ENCODE measurements at regions of chr10 and their contacts with region 1.

Region 1: GRCh38 chr10:6144406-6145165 is 55.8 kb downstream of the RBM17 start:
- DNase-seq: peak; percentile 91
- ATAC-seq: peak; percentile 87
- H3K4me3 ChIP-seq: peak overlapping the region; percentile 63 to 93 (median 74)
- H3K4me3 Mint-ChIP-seq: peak overlapping the region; percentile 91
- H3K27ac ChIP-seq: peak overlapping the region; percentile 49 to 79
- H3K27ac Mint-ChIP-seq: peak overlapping the region; percentile 74
- H3K4me1 ChIP-seq: peaks cover 26 to 50% of the 10 kb centered on the region in 2 donors
- H3K4me1 Mint-ChIP-seq: peaks cover 56% of the 10 kb centered on the region
- H3K27me3 ChIP-seq: peaks cover 0 to 17% (median 5%) of the 10 kb centered on the region in 4 experiments
- H3K27me3 Mint-ChIP-seq: peaks cover 3% of the 10 kb centered on the region
- CTCF ChIP-seq: no peak

Region 2: DNA sequence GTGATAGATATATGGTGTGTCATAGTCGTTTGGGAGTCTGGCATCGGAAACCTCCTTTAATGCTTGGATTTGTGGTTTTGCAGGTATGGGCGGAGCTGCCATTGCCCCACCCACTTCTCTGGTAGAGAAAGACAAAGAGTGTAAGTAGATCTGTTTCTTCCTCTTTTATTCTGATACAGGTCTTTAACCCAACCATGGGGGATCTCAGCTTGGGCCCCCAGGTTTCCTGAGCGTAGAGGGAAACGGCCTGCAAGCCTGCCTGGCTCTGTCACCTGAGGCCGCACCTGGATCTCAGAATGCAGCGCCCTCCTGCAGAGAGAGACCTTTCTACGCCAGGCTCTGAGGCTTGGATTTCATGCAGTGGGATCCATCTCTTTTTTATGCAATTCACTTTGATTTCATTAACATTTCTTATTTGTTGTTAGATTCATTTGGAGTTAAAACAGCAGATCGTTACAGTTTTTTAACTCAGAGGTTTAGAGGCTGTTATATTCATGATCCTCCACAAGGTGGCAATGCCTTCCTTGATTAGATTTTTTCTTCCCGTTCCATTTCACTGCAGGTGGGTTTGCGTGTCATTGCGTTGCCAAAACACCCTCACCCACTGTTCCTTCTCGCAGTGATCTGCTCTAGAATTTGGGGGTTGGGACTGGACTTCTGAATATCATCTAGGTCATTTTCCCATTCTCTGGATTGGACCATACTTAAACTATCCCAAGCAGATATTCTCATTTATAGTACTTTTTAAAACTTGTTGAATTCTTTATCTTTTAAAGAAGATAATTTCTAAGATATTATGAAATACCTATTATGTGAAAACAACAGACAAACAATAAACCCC is 35.8 kb before region 1 on chr10:
- CTCF ChIA-PET with region 1: interaction called, 10 read pairs
- POLR2A ChIA-PET with region 1: no interaction called
- intact Hi-C with region 1: no loop called
- DNase-seq: peak; percentile 72
- ATAC-seq: peak; percentile 80
- H3K4me3 ChIP-seq: no peak overlapping the region
- H3K4me3 Mint-ChIP-seq: no peak overlapping the region
- H3K27ac ChIP-seq: no peak overlapping the region
- H3K27ac Mint-ChIP-seq: no peak overlapping the region
- H3K4me1 ChIP-seq: peaks cover 7 to 9% of the 10 kb centered on the region in 2 donors
- H3K4me1 Mint-ChIP-seq: peaks cover 12% of the 10 kb centered on the region
- H3K27me3 ChIP-seq: no peaks in the 10 kb centered on the region
- H3K27me3 Mint-ChIP-seq: no peaks in the 10 kb centered on the region
- CTCF ChIP-seq: peak; percentile 87

Region 3: GRCh38 chr10:6163364-6164270 is 19.0 kb after region 1 on chr10:
- CTCF ChIA-PET with region 1: interaction called, 6 read pairs
- POLR2A ChIA-PET with region 1: interaction called, 5 read pairs
- intact Hi-C with region 1: loop called (anchors 1 kb)
- DNase-seq: peak; percentile 95
- ATAC-seq: peak; percentile 96
- H3K4me3 ChIP-seq: peak overlapping the region in 4 of 5 experiments; percentile 69 to 84 (median 72)
- H3K4me3 Mint-ChIP-seq: peak overlapping the region; percentile 97
- H3K27ac ChIP-seq: peak overlapping the region; percentile 89 to 96
- H3K27ac Mint-ChIP-seq: peak overlapping the region; percentile 98
- H3K4me1 ChIP-seq: peaks cover 16 to 19% of the 10 kb centered on the region in 2 donors
- H3K4me1 Mint-ChIP-seq: peaks cover 39% of the 10 kb centered on the region
- H3K27me3 ChIP-seq: no peaks in the 10 kb centered on the region
- H3K27me3 Mint-ChIP-seq: no peaks in the 10 kb centered on the region
- CTCF ChIP-seq: no peak

Region 4: GRCh38 chr10:6195846-6196245 is 51.3 kb after region 1 on chr10:
- CTCF ChIA-PET with region 1: no interaction called
- POLR2A ChIA-PET with region 1: no interaction called
- intact Hi-C with region 1: no loop called
- DNase-seq: no peak
- ATAC-seq: no peak
- H3K4me3 ChIP-seq: no peak overlapping the region
- H3K4me3 Mint-ChIP-seq: no peak overlapping the region
- H3K27ac ChIP-seq: no peak overlapping the region
- H3K27ac Mint-ChIP-seq: no peak overlapping the region
- H3K4me1 ChIP-seq: peaks cover 6 to 10% of the 10 kb centered on the region in 2 donors
- H3K4me1 Mint-ChIP-seq: peaks cover 16% of the 10 kb centered on the region
- H3K27me3 ChIP-seq: no peaks in the 10 kb centered on the region
- H3K27me3 Mint-ChIP-seq: no peaks in the 10 kb centered on the region
- CTCF ChIP-seq: no peak

Region 5: GRCh38 chr10:6936931-6937330 is 792.3 kb after region 1 on chr10:
- CTCF ChIA-PET with region 1: no interaction called
- POLR2A ChIA-PET with region 1: no interaction called
- intact Hi-C with region 1: no loop called
- DNase-seq: no peak
- ATAC-seq: no peak
- H3K4me3 ChIP-seq: no peak overlapping the region
- H3K4me3 Mint-ChIP-seq: no peak overlapping the region
- H3K27ac ChIP-seq: no peak overlapping the region
- H3K27ac Mint-ChIP-seq: no peak overlapping the region
- H3K4me1 ChIP-seq: no peaks in the 10 kb centered on the region
- H3K4me1 Mint-ChIP-seq: peaks cover 2% of the 10 kb centered on the region
- H3K27me3 ChIP-seq: peaks cover 0 to 10% (median 1%) of the 10 kb centered on the region in 4 experiments
- H3K27me3 Mint-ChIP-seq: peaks cover 9% of the 10 kb centered on the region
- CTCF ChIP-seq: no peak

Region 6: GRCh38 chr10:7787857-7788638 is 1643.5 kb after region 1 on chr10 and contains the starts of genes ATP5F1C and KIN:
- CTCF ChIA-PET with region 1: no interaction called
- POLR2A ChIA-PET with region 1: no interaction called
- intact Hi-C with region 1: loop called (anchors 5 kb)
- DNase-seq: peak; percentile 98
- ATAC-seq: peak; percentile 98
- H3K4me3 ChIP-seq: peak within 1 kb of the TSS; percentile 87 to 95 (median 87)
- H3K4me3 Mint-ChIP-seq: no peak within 1 kb of the TSS
- H3K27ac ChIP-seq: peak within 1 kb of the TSS; percentile 50 to 75
- H3K27ac Mint-ChIP-seq: peak within 1 kb of the TSS; percentile 47
- H3K4me1 ChIP-seq: peaks cover 26 to 28% of the 10 kb centered on the region in 2 donors
- H3K4me1 Mint-ChIP-seq: peaks cover 51% of the 10 kb centered on the region
- H3K27me3 ChIP-seq: no peaks in the 10 kb centered on the region
- H3K27me3 Mint-ChIP-seq: no peaks in the 10 kb centered on the region
- CTCF ChIP-seq: no peak
- total RNA-seq, gene ATP5F1C: 110 and 114 TPM in 2 replicates
- total RNA-seq, gene KIN: 16.5 and 17.3 TPM in 2 replicates